ENCODE measurements at regions of chr1 and their contacts with region 1.

Region 1: DNA sequence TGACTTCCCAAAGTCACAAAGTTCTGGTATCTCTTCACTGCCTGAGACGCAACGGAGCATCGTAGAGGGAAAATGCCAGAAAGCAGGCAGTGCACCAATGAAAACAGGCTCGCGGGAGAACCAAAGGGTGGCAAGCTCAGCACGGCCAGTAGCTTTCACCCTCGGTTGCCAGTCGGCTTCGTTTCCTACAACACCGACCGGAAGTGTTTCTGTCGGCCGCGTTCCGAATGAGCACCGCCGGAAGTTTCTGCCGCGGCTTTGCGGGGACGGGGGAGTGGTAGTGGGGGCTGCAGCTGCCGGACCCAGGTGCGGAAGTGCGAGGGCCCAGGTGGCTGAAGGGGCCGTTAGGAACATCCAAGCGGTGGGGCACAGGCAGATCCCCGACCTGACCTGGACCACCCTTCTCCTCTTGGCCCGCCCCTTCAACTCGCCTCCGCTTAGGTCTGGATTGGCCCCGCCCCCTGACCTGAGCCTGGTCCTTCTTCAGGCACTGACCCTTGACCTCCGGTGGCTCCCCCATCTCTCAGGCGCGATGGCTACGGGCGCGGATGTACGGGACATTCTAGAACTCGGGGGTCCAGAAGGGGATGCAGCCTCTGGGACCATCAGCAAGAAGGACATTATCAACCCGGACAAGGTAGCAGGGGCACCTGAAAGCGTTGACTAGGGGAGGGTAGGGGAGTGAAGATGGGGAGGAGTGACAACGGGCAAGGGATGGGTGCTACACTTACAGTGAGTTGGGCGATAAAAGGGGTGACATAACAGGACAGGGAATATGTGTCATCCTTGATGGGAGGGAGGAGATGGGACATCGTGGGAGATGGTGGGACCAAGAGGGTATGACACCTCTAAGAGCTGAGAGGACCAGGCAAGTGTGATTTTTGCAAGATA is at the start of gene DMAP1:
- DNase-seq: peak; percentile 77 to 92 (median 82)
- ATAC-seq: peak; percentile 89
- H3K4me3 ChIP-seq: peak within 1 kb of the TSS; percentile 92
- H3K4me3 Mint-ChIP-seq: peak within 1 kb of the TSS; percentile 98
- H3K27ac ChIP-seq: peak within 1 kb of the TSS; percentile 64 to 75
- H3K27ac Mint-ChIP-seq: peak within 1 kb of the TSS; percentile 93
- H3K4me1 ChIP-seq: peaks cover 29% of the 10 kb centered on the region
- H3K4me1 Mint-ChIP-seq: peaks cover 47% of the 10 kb centered on the region
- H3K27me3 ChIP-seq: no peaks in the 10 kb centered on the region
- H3K27me3 Mint-ChIP-seq: no peaks in the 10 kb centered on the region
- CTCF ChIP-seq: no peak
- total RNA-seq, gene DMAP1: 53.4 to 56.9 TPM

Region 2: GRCh38 chr1:44161546-44161945 is 51.9 kb before region 1 on chr1:
- CTCF ChIA-PET with region 1: no interaction called
- POLR2A ChIA-PET with region 1: no interaction called
- intact Hi-C with region 1: no loop called
- DNase-seq: no peak
- ATAC-seq: no peak
- H3K4me3 ChIP-seq: no peak overlapping the region
- H3K4me3 Mint-ChIP-seq: no peak overlapping the region
- H3K27ac ChIP-seq: no peak overlapping the region
- H3K27ac Mint-ChIP-seq: no peak overlapping the region
- H3K4me1 ChIP-seq: no peaks in the 10 kb centered on the region
- H3K4me1 Mint-ChIP-seq: no peaks in the 10 kb centered on the region
- H3K27me3 ChIP-seq: no peaks in the 10 kb centered on the region
- H3K27me3 Mint-ChIP-seq: no peaks in the 10 kb centered on the region
- CTCF ChIP-seq: no peak

Region 3: DNA sequence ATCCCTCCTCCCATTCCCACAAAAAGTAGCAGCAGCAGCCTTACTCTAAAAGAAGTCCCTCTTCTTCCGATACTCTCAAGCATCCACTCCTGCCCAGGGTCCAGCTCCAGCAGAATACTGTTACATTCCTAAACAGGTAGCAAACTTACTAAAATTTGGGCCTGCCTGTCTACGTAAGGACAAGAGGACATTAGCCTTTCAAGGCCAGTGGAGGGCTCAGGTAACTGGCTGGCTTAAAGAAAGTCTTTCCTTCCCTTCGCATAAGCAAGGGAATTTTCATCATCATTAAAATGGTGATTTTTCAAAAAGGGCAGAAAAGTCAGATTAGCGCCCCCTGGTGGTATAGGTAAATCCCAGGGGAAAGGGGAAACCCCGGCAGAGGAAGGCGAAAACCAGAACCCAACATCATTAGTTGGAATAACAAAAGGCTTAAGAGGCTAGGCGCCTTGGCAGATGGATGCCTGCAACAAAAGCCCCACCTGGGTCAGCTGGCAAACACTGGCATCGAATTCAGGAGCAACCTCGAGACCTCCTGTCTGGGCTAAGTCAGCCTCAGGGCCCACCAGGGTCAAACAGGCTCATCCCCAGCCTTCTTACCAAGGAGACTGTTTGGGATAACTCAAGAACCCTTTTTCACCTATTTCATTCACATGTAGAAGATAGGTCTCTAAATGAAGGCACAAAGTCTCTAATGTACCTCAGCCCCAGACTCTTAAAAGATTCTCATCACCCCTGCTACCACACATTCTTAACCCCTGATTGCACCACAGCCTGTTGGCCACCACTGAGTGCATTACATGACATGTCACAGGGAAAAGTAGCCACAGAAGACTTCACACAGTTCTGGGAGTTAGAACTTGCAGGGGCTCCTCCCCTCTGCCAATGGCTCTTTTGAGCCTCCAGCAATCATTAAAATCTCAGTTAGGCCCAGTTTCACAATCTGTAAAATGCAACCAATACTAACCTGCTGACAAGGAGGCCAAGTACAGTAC is 104.9 kb after region 1 on chr1:
- CTCF ChIA-PET with region 1: interaction called, 3 read pairs
- POLR2A ChIA-PET with region 1: interaction called, 3 read pairs
- intact Hi-C with region 1: loop called (anchors 1 to 2 kb)
- DNase-seq: peak in 12 of 14 experiments; percentile 9 to 76 (median 22)
- ATAC-seq: peak; percentile 41
- H3K4me3 ChIP-seq: no peak overlapping the region
- H3K4me3 Mint-ChIP-seq: no peak overlapping the region
- H3K27ac ChIP-seq: no peak overlapping the region
- H3K27ac Mint-ChIP-seq: no peak overlapping the region
- H3K4me1 ChIP-seq: peaks cover 3% of the 10 kb centered on the region
- H3K4me1 Mint-ChIP-seq: peaks cover 6% of the 10 kb centered on the region
- H3K27me3 ChIP-seq: no peaks in the 10 kb centered on the region
- H3K27me3 Mint-ChIP-seq: no peaks in the 10 kb centered on the region
- CTCF ChIP-seq: peak; percentile 91

Region 4: DNA sequence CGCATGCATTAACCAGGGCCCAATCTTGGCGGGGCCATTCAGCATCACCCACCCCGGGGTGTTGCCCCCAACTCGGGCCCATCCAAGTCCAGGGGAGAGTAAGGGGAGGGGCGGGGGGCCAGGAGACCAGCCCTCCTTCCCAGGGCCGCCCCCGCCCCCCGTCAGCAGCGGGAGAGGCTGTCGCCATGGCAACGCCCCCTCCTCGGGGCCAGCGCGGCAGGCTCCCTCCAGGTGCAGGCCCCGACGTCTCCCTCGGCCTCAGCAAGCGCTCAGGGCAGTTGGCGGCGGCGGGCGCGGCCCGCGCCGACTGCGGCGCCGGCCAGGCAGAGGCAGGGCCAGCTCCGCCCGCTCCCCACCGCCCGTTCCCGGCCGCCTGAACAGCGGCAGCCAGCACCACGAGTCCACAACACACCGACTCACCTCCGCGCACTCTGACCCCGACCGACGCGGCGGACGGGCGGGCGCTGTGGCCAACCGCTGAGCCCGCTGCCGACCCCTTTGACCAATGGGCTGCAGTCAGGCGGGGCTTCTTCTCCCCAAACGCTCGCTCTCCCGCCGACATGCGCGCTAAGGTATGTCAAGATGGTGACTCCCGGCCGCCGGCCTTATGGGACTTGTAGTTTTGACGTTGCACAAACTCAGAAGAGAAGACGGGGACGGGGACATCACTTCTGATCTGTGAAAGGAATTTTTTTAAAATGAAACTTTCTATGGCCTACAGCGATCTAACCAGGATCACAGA is 141.5 kb after region 1 on chr1 and contains the start of gene ERI3:
- CTCF ChIA-PET with region 1: no interaction called
- POLR2A ChIA-PET with region 1: no interaction called
- intact Hi-C with region 1: loop called in 1 of 2 experiments (anchors 2 kb)
- DNase-seq: peak; percentile 93 to 98 (median 95)
- ATAC-seq: peak; percentile 100
- H3K4me3 ChIP-seq: peak within 1 kb of the TSS; percentile 80
- H3K4me3 Mint-ChIP-seq: peak within 1 kb of the TSS; percentile 94
- H3K27ac ChIP-seq: peak within 1 kb of the TSS in 1 of 2 donors; percentile 29
- H3K27ac Mint-ChIP-seq: peak within 1 kb of the TSS; percentile 63
- H3K4me1 ChIP-seq: peaks cover 19% of the 10 kb centered on the region
- H3K4me1 Mint-ChIP-seq: peaks cover 45% of the 10 kb centered on the region
- H3K27me3 ChIP-seq: no peaks in the 10 kb centered on the region
- H3K27me3 Mint-ChIP-seq: no peaks in the 10 kb centered on the region
- CTCF ChIP-seq: no peak
- total RNA-seq, gene ERI3: 19.7 to 20.7 TPM

Region 5: DNA sequence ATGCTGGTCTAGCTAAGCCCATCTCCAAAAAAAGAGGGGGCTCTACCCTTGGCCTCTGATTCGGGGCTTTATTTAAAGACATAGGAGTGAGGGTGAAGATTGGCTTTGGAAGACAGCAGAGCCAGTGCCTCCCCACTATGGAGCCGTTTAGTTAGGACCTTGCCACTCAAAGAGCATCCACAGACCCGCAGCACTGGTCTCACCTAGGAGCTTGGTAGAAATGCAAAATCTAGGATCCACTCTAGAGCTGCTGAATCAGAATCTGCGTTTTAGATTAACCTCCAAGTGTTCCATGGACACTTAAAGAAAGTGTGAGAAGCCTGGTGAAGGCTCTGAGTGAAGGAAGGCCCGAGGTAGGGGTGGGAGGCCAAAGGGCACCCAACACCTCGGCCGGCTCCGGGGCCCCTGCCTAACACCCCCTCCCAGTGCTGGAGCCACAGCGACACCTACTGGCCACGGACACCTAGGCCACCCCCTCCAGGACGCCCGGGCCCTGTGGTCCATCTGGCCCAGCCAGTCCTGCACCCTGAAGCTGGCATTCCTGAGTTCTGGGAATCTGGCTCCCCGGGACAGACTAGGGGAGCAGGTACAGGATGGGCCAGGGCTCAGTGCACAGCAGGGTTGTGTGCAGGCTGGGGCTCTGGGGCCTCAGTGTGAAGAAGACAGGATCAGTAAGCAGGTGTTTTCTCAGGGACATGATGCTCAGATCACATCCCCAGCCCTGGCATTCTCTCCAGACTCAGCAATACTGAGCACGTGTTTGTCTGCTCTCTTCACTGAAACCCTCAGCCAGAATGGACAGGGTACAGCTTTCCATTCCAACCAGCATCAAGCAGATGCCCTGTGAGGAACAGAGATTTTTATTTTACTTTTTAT is 381.6 kb after region 1 on chr1:
- CTCF ChIA-PET with region 1: interaction called, 3 read pairs
- POLR2A ChIA-PET with region 1: no interaction called
- intact Hi-C with region 1: loop called in 1 of 2 experiments (anchors 5 kb)
- DNase-seq: peak; percentile 55 to 85 (median 70)
- ATAC-seq: peak; percentile 77
- H3K4me3 ChIP-seq: no peak overlapping the region
- H3K4me3 Mint-ChIP-seq: no peak overlapping the region
- H3K27ac ChIP-seq: no peak overlapping the region
- H3K27ac Mint-ChIP-seq: no peak overlapping the region
- H3K4me1 ChIP-seq: peaks cover 6% of the 10 kb centered on the region
- H3K4me1 Mint-ChIP-seq: no peaks in the 10 kb centered on the region
- H3K27me3 ChIP-seq: peaks cover 0 to 3% of the 10 kb centered on the region in 2 experiments
- H3K27me3 Mint-ChIP-seq: no peaks in the 10 kb centered on the region
- CTCF ChIP-seq: peak; percentile 90

Measured in CD4-positive, alpha-beta T cell (primary cell).